ENCODE measurements at regions of chr18 and their contacts with region 1.

Region 1: GRCh38 chr18:68256418-68257067 is 458.4 kb downstream of the TMX3 start:
- DNase-seq: no peak
- H3K4me3 ChIP-seq: no peak overlapping the region
- H3K27ac ChIP-seq: no peak overlapping the region
- H3K4me1 ChIP-seq: no peaks in the 10 kb centered on the region
- H3K27me3 ChIP-seq: no peaks in the 10 kb centered on the region
- CTCF ChIP-seq: no peak
- POLR2A ChIP-seq: no peak

Region 2: GRCh38 chr18:67282796-67283195 is 973.7 kb before region 1 on chr18:
- intact Hi-C with region 1: no loop called
- DNase-seq: no peak
- H3K4me3 ChIP-seq: no peak overlapping the region
- H3K27ac ChIP-seq: no peak overlapping the region
- H3K4me1 ChIP-seq: no peaks in the 10 kb centered on the region
- H3K27me3 ChIP-seq: no peaks in the 10 kb centered on the region
- CTCF ChIP-seq: no peak
- POLR2A ChIP-seq: no peak

Region 3: DNA sequence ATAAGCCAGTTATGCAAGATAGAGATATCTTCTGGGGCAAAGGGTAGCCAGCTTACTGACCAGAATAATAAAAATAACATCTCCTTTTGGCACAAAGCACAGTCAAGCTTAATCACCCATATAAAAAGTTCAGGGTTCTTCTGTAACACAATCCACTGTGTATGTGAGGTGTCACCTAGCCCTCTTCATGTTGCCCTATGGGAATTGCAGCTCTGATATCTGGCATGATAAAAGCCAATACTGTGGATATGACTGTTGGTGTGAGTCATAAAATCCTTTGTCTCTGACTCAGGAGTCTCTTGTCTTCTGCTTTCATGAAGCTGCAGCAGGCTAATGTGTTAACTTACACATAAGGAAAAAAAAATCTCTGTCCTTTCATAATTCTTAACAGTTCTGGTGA is 830.8 kb before region 1 on chr18:
- intact Hi-C with region 1: no loop called
- DNase-seq: no peak
- H3K4me3 ChIP-seq: no peak overlapping the region
- H3K27ac ChIP-seq: no peak overlapping the region
- H3K4me1 ChIP-seq: no peaks in the 10 kb centered on the region
- H3K27me3 ChIP-seq: no peaks in the 10 kb centered on the region
- CTCF ChIP-seq: no peak
- POLR2A ChIP-seq: no peak

Region 4: GRCh38 chr18:67710639-67711038 is 545.9 kb before region 1 on chr18:
- intact Hi-C with region 1: loop called (anchors 5 kb)
- DNase-seq: no peak
- H3K4me3 ChIP-seq: no peak overlapping the region
- H3K27ac ChIP-seq: no peak overlapping the region
- H3K4me1 ChIP-seq: no peaks in the 10 kb centered on the region
- H3K27me3 ChIP-seq: no peaks in the 10 kb centered on the region
- CTCF ChIP-seq: no peak
- POLR2A ChIP-seq: no peak

Region 5: DNA sequence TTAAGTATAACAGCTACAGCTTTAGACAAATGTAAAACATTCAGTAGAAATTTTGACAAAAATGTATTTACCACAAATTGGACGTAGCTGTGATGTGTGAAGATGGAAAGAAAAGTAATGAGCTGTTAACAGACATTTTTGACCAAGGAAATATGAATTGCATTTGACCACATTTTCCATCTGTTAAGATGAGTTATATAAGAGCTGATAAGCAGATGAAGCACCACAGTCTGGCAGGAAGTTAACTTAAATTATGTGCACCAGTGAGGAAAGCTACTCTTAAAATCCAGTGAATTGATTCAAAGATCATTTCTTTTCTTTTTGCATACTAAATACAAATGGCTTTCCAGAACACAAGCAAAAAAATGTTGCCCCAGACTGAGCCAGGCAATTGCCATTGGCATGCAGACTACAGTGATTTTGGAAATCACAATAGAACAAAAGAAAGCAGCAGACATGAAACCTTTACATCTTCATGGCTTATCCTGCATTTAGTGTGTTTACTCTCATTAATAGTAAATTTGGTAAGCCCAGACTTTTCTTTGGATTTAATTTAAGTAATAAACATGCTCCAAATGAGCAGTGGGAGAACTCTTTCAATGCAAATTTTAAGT is 35.3 kb before region 1 on chr18:
- intact Hi-C with region 1: no loop called
- DNase-seq: no peak
- H3K4me3 ChIP-seq: no peak overlapping the region
- H3K27ac ChIP-seq: no peak overlapping the region
- H3K4me1 ChIP-seq: no peaks in the 10 kb centered on the region
- H3K27me3 ChIP-seq: no peaks in the 10 kb centered on the region
- CTCF ChIP-seq: no peak
- POLR2A ChIP-seq: no peak

Measured in breast epithelium (tissue), 4 donors.